ENCODE measurements at regions of chr11 and their contacts with region 1.

Region 1: GRCh38 chr11:128522055-128522942 is 65.1 kb downstream of the ETS1 start:
- DNase-seq: peak; percentile 80 to 86
- ATAC-seq: peak; percentile 85 to 91
- H3K4me3 ChIP-seq: peak overlapping the region; percentile 84 to 95 (median 88)
- H3K27ac ChIP-seq: peak overlapping the region; percentile 88 to 92 (median 88)
- H3K4me1 ChIP-seq: peaks cover 26 to 33% of the 10 kb centered on the region in 2 donors
- H3K27me3 ChIP-seq: no peaks in the 10 kb centered on the region
- CTCF ChIP-seq: peak in 1 of 5 experiments; percentile 23
- POLR2A ChIP-seq: peak; percentile 89 to 92

Region 2: GRCh38 chr11:128172046-128172878 is 350.0 kb before region 1 on chr11:
- in situ Hi-C with region 1: no loop called
- intact Hi-C with region 1: no loop called
- DNase-seq: peak; percentile 31 to 55
- ATAC-seq: peak; percentile 60 to 65
- H3K4me3 ChIP-seq: no peak overlapping the region
- H3K27ac ChIP-seq: no peak overlapping the region
- H3K4me1 ChIP-seq: no peaks in the 10 kb centered on the region
- H3K27me3 ChIP-seq: no peaks in the 10 kb centered on the region
- CTCF ChIP-seq: peak; percentile 61 to 76 (median 65)
- POLR2A ChIP-seq: no peak

Region 3: GRCh38 chr11:128361451-128362020 is 160.8 kb before region 1 on chr11:
- in situ Hi-C with region 1: no loop called
- intact Hi-C with region 1: no loop called
- DNase-seq: no peak
- ATAC-seq: no peak
- H3K4me3 ChIP-seq: no peak overlapping the region
- H3K27ac ChIP-seq: no peak overlapping the region
- H3K4me1 ChIP-seq: peaks cover 4 to 6% of the 10 kb centered on the region in 2 donors
- H3K27me3 ChIP-seq: no peaks in the 10 kb centered on the region
- CTCF ChIP-seq: no peak
- POLR2A ChIP-seq: no peak

Region 4: DNA sequence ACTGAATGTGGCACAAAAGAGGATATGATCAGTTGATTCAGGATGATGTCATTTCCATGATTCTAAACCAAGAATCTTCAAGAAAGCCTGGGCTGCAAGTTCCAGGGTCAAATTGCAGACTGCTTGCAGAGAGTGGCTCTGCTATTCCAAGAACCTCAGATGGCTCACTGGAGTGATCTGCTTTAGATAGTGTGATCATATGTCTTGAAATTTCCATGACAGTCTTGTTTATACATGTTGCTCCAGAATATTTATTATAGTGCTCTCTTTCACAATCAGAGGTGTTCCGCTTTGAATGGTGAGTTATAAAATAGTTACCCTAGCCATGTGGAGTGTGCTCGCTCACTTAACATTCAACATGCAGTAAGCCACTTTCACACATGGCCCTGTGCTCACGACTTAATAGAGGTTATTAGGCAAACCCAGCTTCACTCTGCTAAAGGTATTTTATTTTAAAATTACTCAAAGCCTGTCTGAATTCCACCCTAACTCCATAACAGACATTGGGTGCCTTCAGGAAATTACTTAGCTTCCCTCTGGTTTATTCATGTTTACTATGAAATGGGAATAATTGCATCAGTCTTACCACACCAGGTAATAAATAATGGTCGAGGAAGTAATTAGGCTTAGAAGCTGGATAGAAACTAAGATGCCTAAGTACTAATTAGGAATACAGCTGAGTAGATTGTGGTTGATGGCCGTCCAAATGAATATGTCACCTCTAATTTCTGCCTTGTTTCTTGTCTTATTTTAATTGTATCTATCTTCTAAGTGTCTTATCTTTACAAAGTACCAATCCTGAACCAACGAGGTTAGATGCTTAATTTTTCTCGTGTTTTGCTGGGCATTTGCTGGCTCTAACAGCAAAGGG is 122.8 kb before region 1 on chr11:
- in situ Hi-C with region 1: no loop called
- intact Hi-C with region 1: loop called (anchors 5 kb)
- DNase-seq: peak in 1 of 2 donors; percentile 12
- ATAC-seq: peak; percentile 96 to 98
- H3K4me3 ChIP-seq: no peak overlapping the region
- H3K27ac ChIP-seq: peak overlapping the region; percentile 18 to 76 (median 70)
- H3K4me1 ChIP-seq: peaks cover 25 to 27% of the 10 kb centered on the region in 2 donors
- H3K27me3 ChIP-seq: no peaks in the 10 kb centered on the region
- CTCF ChIP-seq: no peak
- POLR2A ChIP-seq: no peak

Region 5: GRCh38 chr11:128417607-128418324 is 104.5 kb before region 1 on chr11:
- in situ Hi-C with region 1: no loop called
- intact Hi-C with region 1: loop called (anchors 5 kb)
- DNase-seq: no peak
- ATAC-seq: peak; percentile 92 to 99
- H3K4me3 ChIP-seq: no peak overlapping the region
- H3K27ac ChIP-seq: peak overlapping the region; percentile 24 to 66 (median 52)
- H3K4me1 ChIP-seq: peaks cover 27 to 34% of the 10 kb centered on the region in 2 donors
- H3K27me3 ChIP-seq: no peaks in the 10 kb centered on the region
- CTCF ChIP-seq: no peak
- POLR2A ChIP-seq: no peak

Region 6: GRCh38 chr11:128482512-128483191 is 39.6 kb before region 1 on chr11:
- in situ Hi-C with region 1: no loop called
- intact Hi-C with region 1: loop called (anchors 5 kb)
- DNase-seq: peak; percentile 44 to 68
- ATAC-seq: peak; percentile 59 to 76
- H3K4me3 ChIP-seq: peak overlapping the region; percentile 2 to 21 (median 8)
- H3K27ac ChIP-seq: peak overlapping the region; percentile 57 to 70 (median 68)
- H3K4me1 ChIP-seq: peaks cover 49 to 73% of the 10 kb centered on the region in 2 donors
- H3K27me3 ChIP-seq: no peaks in the 10 kb centered on the region
- CTCF ChIP-seq: no peak
- POLR2A ChIP-seq: no peak

Region 7: DNA sequence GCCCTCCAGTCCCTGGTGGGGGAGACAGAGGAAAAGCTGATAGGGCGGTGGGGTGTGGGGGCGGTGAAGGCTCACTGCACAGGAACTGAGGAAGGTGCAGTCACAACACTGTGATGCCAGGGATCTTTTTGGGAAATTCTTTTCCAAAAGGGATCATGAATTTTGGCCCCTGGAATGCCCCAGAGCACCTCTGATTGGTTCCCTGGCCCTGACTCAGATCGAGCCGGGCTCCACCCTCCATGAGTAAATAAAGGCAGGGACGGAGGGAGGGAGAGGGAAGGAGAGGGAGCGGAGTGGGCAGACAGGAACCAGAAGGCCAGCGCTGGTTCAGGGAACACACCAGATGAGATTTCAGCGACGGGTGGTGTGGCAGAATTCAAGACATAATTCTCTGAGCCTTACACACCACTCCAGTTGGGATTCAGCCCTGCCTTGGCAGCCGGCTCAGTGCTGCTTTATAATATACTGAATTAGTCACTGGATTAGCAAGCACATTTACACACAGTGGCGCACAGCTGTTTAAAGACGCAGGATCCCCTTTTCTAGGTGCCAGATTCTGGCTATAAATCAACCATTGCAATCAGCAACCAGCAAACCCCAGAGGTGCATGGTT is 15.2 kb before region 1 on chr11:
- in situ Hi-C with region 1: no loop called
- intact Hi-C with region 1: loop called (anchors 1 kb)
- DNase-seq: peak; percentile 76 to 89
- ATAC-seq: peak; percentile 89
- H3K4me3 ChIP-seq: peak overlapping the region; percentile 35 to 45 (median 38)
- H3K27ac ChIP-seq: peak overlapping the region; percentile 80 to 88 (median 84)
- H3K4me1 ChIP-seq: peaks cover 75 to 85% of the 10 kb centered on the region in 2 donors
- H3K27me3 ChIP-seq: no peaks in the 10 kb centered on the region
- CTCF ChIP-seq: no peak
- POLR2A ChIP-seq: peak; percentile 59 to 78

Region 8: GRCh38 chr11:128552783-128553661 is 30.7 kb after region 1 on chr11:
- in situ Hi-C with region 1: no loop called
- intact Hi-C with region 1: loop called (anchors 2 kb)
- DNase-seq: no peak
- ATAC-seq: no peak
- H3K4me3 ChIP-seq: no peak overlapping the region
- H3K27ac ChIP-seq: peak overlapping the region in 3 of 4 donors; percentile 21 to 41 (median 29)
- H3K4me1 ChIP-seq: peaks cover 3 to 5% of the 10 kb centered on the region in 2 donors
- H3K27me3 ChIP-seq: no peaks in the 10 kb centered on the region
- CTCF ChIP-seq: no peak
- POLR2A ChIP-seq: no peak

Region 9: GRCh38 chr11:128579798-128580504 is 57.7 kb after region 1 on chr11:
- in situ Hi-C with region 1: loop called in 1 of 4 experiments (anchors 10 kb)
- intact Hi-C with region 1: no loop called
- DNase-seq: no peak
- ATAC-seq: no peak
- H3K4me3 ChIP-seq: no peak overlapping the region
- H3K27ac ChIP-seq: peak overlapping the region; percentile 24 to 52 (median 32)
- H3K4me1 ChIP-seq: peaks cover 0 to 38% of the 10 kb centered on the region in 2 donors
- H3K27me3 ChIP-seq: peaks cover 0 to 10% (median 0%) of the 10 kb centered on the region in 3 donors
- CTCF ChIP-seq: no peak
- POLR2A ChIP-seq: no peak

Region 10: DNA sequence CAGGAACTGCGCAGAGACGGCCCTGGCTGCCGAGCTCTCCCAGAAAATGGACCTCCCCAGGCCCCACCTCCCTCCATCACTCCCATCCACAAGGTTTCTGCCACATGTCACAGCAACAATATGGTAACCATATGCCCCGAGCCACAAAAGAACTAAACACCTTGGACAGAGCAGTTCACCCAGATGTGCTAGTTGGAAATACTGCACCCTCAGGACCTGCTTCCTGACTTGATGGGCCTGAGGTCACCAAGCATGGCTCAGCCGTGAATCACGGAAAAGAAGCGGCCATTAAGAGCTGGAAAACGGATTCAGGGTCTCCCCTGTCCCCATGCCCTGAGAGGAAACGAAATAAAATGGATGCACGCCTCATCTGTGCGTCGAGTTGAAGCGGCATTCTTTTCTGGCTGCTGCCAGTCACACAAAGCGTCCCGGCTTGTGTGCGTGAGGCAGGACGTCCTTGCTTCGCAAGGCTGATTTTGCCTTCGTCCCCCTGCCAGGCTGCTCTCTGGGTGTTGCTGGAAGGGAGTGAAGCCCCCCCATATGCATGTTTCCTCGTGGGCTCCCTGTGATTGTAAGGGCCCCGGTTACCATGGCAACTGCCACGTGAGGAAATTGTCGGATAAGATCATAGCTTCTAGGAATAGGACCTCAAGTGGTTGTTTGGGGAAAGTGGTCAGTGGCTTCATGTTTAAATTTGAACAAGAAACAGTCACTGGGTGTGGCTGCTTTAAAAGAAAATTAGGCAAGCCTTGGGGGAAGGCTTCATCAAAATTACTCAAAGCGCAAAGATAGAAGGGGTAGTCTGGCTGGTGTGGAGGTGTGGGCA is 223.2 kb after region 1 on chr11:
- in situ Hi-C with region 1: no loop called
- intact Hi-C with region 1: no loop called
- DNase-seq: no peak
- ATAC-seq: no peak
- H3K4me3 ChIP-seq: no peak overlapping the region
- H3K27ac ChIP-seq: no peak overlapping the region
- H3K4me1 ChIP-seq: no peaks in the 10 kb centered on the region
- H3K27me3 ChIP-seq: no peaks in the 10 kb centered on the region
- CTCF ChIP-seq: no peak
- POLR2A ChIP-seq: no peak

Measured in gastrocnemius medialis (tissue), 4 donors.